Gastrocnemius medialis (tissue), 4 donors: ENCODE measurements at regions of chr15 and their contacts with region 1.

Region 1: GRCh38 chr15:75903331-75904239 is at the start of gene FBXO22:
- DNase-seq: peak; percentile 81 to 88
- ATAC-seq: peak; percentile 87 to 95
- H3K4me3 ChIP-seq: peak within 1 kb of the TSS; percentile 77 to 96 (median 92)
- H3K27ac ChIP-seq: peak within 1 kb of the TSS; percentile 78 to 85 (median 82)
- H3K4me1 ChIP-seq: peaks cover 3 to 13% of the 10 kb centered on the region in 2 donors
- H3K27me3 ChIP-seq: no peaks in the 10 kb centered on the region
- CTCF ChIP-seq: no peak
- POLR2A ChIP-seq: peak; percentile 58 to 77
- total RNA-seq, gene FBXO22: 12.3 to 13.9 (median 13.0) TPM

Region 2: DNA sequence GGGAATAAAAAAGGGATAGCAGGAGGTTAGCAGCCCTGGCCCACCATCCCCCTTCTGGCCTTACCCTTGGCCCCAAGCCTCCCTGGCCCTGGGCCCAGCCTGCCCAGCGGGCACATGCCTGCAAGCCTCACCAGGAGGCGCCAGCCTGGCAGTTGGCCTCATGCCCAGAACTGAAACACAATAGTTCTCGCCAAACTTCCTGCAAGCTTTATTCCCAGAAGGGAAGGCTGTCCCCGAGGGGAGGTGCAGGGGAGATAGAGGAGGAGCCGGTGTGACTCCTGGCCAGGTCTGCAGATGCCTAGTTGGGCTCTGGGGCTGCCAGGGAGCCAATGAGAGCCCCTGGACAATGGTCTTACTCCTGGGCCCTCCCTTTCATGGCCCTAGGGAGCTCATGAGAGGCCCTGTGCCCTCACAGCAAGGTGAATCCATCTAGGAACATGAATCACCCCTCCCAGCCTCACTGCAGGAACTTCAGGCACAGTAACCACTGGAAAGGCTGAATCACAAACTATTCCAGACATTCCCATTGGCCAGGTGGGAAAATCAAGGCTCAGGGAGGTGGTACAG is 1663.5 kb before region 1 on chr15:
- in situ Hi-C with region 1: no loop called
- intact Hi-C with region 1: no loop called
- DNase-seq: peak; percentile 67 to 91
- ATAC-seq: peak; percentile 88 to 92
- H3K4me3 ChIP-seq: no peak overlapping the region
- H3K27ac ChIP-seq: peak overlapping the region; percentile 43 to 75 (median 56)
- H3K4me1 ChIP-seq: peaks cover 15 to 24% of the 10 kb centered on the region in 2 donors
- H3K27me3 ChIP-seq: peaks cover 0 to 3% (median 0%) of the 10 kb centered on the region in 3 donors
- CTCF ChIP-seq: peak; percentile 34 to 52 (median 46)
- POLR2A ChIP-seq: no peak

Region 3: GRCh38 chr15:75809986-75810750 is 93.4 kb before region 1 on chr15:
- in situ Hi-C with region 1: no loop called
- intact Hi-C with region 1: loop called (anchors 10 kb)
- DNase-seq: no peak
- ATAC-seq: no peak
- H3K4me3 ChIP-seq: no peak overlapping the region
- H3K27ac ChIP-seq: no peak overlapping the region
- H3K4me1 ChIP-seq: no peaks in the 10 kb centered on the region
- H3K27me3 ChIP-seq: no peaks in the 10 kb centered on the region
- CTCF ChIP-seq: peak in 1 of 5 experiments; percentile 20
- POLR2A ChIP-seq: no peak

Region 4: DNA sequence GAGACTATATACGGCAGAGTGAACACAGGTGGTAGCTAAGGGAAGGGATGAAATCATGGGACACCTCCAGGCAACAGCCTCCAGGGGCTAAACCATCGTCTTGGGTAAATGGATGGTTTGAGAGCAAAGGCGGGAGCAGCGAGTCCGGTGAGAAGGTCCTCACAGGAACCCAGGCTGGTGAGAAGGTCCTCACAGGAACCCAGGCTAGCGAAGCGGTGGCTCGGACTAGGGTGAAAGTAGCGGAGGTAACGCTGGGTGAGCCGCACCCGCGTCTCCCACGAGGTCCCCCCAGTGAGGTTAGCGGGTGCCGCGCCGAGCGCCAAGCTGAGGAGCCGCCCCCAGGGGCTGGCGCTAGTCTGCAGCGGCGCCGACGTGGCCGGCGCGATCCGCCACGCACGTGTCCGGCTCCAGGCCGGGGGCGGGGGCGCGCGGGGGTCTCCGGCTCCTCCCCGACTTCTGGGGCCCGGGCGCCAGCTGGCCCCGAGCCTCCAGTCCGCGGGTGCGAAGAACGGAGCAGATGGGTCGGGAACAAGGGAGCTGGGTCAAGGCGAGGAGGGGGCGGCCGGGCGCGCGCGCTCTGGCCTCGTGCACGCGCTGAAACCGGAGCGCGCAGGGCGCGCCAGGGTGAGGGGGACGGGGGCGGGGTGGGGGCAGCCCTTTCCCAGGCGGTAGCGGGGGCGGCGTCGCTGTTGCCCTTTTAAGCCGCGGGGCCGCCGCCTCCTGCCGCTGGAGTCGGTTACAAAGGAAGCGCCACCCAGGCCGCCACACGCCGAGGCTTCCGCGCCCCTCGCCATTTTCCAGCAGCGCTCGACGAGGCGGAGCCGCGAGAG is 60.6 kb before region 1 on chr15 and contains the start of gene UBE2Q2:
- in situ Hi-C with region 1: no loop called
- intact Hi-C with region 1: loop called (anchors 2 kb)
- DNase-seq: peak; percentile 26 to 42
- ATAC-seq: peak; percentile 59 to 64
- H3K4me3 ChIP-seq: peak within 1 kb of the TSS; percentile 69 to 94 (median 90)
- H3K27ac ChIP-seq: peak within 1 kb of the TSS; percentile 74 to 87 (median 85)
- H3K4me1 ChIP-seq: peaks cover 30 to 35% of the 10 kb centered on the region in 2 donors
- H3K27me3 ChIP-seq: no peaks in the 10 kb centered on the region
- CTCF ChIP-seq: no peak
- POLR2A ChIP-seq: peak; percentile 50 to 53
- total RNA-seq, gene UBE2Q2: 15.9 to 25.5 (median 23.9) TPM